ENCODE measurements at regions of chr17 and their contacts with region 1.

Region 1: DNA sequence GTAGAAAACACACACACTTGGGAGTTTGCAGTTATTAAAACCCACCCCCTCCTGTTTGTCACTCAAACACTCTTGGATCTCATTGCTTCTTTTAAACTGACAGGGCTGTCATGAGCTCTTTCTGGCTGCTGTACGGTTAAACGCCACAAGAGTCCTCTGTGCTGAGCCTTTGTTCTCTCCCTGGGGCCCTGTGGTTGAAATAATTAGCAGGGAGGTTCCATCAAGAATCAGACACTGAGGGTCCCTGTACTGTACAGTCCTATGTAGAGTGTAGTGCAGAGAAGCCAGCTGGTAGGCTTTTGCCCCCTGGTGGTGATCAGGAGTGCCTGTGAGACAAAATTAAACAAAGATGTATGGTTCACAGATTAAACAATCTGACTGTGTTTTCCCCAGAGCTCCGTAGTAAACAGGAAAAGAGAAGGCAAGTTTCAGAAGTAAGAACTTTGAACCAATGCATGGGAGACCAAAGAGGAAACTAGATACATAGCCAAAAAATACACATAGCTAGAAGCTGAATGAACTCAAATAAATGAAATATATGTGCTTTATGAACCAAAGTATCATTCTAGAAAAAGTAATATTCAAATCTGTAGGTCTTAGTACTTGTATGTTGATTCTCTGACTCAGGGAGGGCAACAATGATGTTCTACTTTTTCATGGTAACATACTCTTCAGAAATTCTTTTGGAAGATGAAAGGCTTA is 1.4 kb upstream of the SSH2 start:
- DNase-seq: peak; percentile 33 to 64 (median 46)
- H3K4me3 ChIP-seq: no peak overlapping the region
- H3K27ac ChIP-seq: no peak overlapping the region
- H3K4me1 ChIP-seq: peaks cover 1% of the 10 kb centered on the region
- H3K27me3 ChIP-seq: no peaks in the 10 kb centered on the region
- CTCF ChIP-seq: peak; percentile 73 to 84 (median 78)
- EP300 ChIP-seq: no peak
- POLR2A ChIP-seq: no peak

Region 2: DNA sequence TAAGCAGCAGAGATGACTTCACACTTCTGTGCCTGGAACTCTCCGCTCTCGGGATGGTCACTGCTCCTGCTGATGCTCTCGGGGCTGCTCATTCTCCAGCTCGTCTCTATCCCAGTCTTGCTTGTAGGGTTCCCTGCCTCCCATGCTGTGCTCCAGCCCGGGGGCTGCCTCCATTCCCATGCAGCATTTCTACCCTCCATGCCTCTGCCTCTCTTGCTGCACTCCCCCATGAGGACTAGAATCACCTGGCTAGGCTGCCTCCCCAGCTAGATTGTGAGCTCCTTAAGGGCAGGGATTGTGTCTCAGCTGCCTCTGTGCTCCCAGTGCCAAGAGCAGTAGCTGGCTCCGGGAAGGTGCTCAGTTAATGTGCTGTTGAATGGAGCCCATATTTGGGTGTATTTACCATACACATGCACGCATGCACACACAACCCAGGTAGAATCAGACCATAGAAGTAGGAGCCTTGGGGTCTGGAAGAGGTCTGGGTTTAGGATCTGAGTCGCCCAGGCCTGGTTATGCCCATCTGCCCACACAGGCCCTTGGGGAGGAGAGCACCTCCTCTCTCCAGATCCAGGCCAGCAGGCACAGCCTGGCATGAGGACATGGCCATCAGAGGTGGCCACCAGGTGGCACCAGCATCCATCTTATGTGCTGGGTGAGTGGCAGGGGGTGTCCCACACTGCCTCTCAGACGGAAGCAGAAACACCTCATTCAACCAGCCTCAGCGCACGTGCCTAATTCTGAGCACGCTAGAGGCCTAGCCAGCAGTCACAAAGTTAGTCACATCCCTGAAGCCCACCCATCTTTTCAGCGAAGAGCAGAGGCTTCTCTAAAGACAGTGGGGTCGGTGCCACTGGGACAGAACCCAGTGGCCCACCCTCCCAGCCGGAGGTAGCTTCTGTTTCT is 351.3 kb before region 1 on chr17:
- intact Hi-C with region 1: loop called in 1 of 4 experiments (anchors 10 kb)
- DNase-seq: peak; percentile 70 to 88 (median 84)
- H3K4me3 ChIP-seq: no peak overlapping the region
- H3K27ac ChIP-seq: no peak overlapping the region
- H3K4me1 ChIP-seq: peaks cover 3% of the 10 kb centered on the region
- H3K27me3 ChIP-seq: no peaks in the 10 kb centered on the region
- CTCF ChIP-seq: peak in 2 of 3 donors; percentile 77 to 81
- EP300 ChIP-seq: no peak
- POLR2A ChIP-seq: peak; percentile 8

Region 3: GRCh38 chr17:29633886-29634285 is 297.5 kb before region 1 on chr17:
- intact Hi-C with region 1: loop called in 1 of 4 experiments (anchors 10 kb)
- DNase-seq: no peak
- H3K4me3 ChIP-seq: no peak overlapping the region
- H3K27ac ChIP-seq: no peak overlapping the region
- H3K4me1 ChIP-seq: no peaks in the 10 kb centered on the region
- H3K27me3 ChIP-seq: no peaks in the 10 kb centered on the region
- CTCF ChIP-seq: no peak
- EP300 ChIP-seq: no peak
- POLR2A ChIP-seq: no peak

Region 4: GRCh38 chr17:29807520-29808351 is 123.6 kb before region 1 on chr17:
- intact Hi-C with region 1: loop called (anchors 5 to 10 kb)
- DNase-seq: peak; percentile 37 to 71 (median 54)
- H3K4me3 ChIP-seq: no peak overlapping the region
- H3K27ac ChIP-seq: no peak overlapping the region
- H3K4me1 ChIP-seq: no peaks in the 10 kb centered on the region
- H3K27me3 ChIP-seq: no peaks in the 10 kb centered on the region
- CTCF ChIP-seq: peak; percentile 16 to 57 (median 33)
- EP300 ChIP-seq: no peak
- POLR2A ChIP-seq: no peak